Activated T-helper 1 cell treated with anti-CD3 and anti-CD28 coated beads, Interleukin-12 subunit alpha, Interleukin-12 subunit beta, Interleukin-2, Interleukin-4 antibody, amounts not matched to agents 30 ng/mL and 10 ng/mL and 1 ng/mL, durations not matched to agents 14 hours and 24 hours and 36 hours (primary cell): ENCODE measurements at regions of chr11 and their contacts with region 1.

Region 1: DNA sequence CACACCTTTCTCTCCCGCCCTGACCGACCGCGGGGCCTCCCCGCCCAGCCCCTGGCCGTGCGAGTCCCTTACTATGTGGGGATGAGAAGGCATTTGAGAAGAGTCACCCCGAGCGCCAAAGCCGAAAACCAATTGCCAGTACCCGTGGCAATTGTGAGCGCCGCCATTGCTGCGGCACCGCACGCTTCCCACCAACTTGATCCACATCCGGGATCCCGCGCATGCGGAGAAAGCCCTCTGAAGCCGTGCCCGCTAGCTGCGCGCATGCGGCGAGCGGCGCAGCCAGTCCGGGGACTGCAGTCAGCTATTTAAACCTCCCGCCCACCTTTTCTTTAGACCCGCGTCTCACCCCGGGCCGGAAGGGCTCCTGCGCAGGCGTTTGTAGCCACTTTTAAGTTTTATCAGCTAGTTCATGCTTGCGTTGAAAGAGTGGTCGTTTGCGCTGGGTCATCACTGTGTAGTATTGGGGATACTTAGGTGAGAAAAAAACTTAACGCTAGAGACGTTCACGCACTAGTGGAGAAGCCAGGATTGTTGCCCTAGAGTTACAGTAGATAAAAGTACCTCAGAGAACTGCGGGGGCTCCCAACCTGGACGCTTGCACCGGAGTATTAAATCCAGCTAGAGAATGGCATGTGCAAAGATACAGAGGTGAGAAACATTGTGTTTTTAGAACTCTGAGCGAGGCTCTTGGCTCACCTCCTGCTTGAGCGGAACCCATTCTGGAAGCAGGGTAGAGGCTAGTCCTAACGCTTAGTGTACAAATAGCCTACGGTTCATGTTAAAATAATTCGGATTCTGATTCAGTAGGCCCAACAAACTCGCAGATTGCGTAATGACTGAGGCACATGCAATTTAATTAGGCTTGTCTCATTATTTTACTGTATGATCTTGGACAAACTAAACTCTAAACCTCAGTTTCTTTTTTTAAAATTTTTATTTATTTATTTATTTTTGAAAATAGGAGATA is at the start of gene ALG8:
- DNase-seq: peak; percentile 96
- H3K4me3 Mint-ChIP-seq: peak within 1 kb of the TSS; percentile 95
- H3K27ac Mint-ChIP-seq: peak within 1 kb of the TSS; percentile 90
- H3K4me1 Mint-ChIP-seq: peaks cover 43% of the 10 kb centered on the region
- H3K27me3 Mint-ChIP-seq: no peaks in the 10 kb centered on the region
- total RNA-seq, gene ALG8: 57.9 and 74.2 TPM in 2 replicates

Region 2: GRCh38 chr11:77994412-77995362 is 145.0 kb before region 1 on chr11 and contains the start of gene INTS4:
- intact Hi-C with region 1: loop called (anchors 1 kb)
- DNase-seq: peak; percentile 98
- H3K4me3 Mint-ChIP-seq: peak within 1 kb of the TSS; percentile 92
- H3K27ac Mint-ChIP-seq: peak within 1 kb of the TSS; percentile 84
- H3K4me1 Mint-ChIP-seq: peaks cover 30% of the 10 kb centered on the region
- H3K27me3 Mint-ChIP-seq: no peaks in the 10 kb centered on the region
- total RNA-seq, gene INTS4: 58.2 and 63.6 TPM in 2 replicates

Region 3: DNA sequence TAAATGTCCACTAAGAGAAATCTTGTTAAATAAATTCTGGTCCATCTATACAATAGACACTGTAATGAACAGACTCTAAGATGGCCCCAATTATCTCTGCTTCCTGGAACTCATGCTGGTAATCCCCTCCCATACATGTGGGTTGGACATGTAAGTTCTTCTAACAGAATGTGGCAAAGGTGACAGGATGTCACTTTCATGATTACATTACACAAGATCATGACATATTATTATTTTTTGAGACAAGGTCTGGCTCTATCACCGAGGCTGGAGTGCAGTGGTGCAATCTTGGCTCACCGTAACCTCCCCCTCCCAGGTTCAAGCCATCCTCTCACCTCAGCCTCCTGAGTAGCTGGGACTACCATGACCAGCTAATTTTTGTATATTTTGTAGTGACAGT is 45.5 kb before region 1 on chr11:
- intact Hi-C with region 1: loop called (anchors 1 kb)
- DNase-seq: peak; percentile 20
- H3K4me3 Mint-ChIP-seq: peak overlapping the region; percentile 11
- H3K27ac Mint-ChIP-seq: peak overlapping the region; percentile 82
- H3K4me1 Mint-ChIP-seq: peaks cover 10% of the 10 kb centered on the region
- H3K27me3 Mint-ChIP-seq: no peaks in the 10 kb centered on the region

Region 4: GRCh38 chr11:78228467-78228866 is 88.8 kb after region 1 on chr11:
- intact Hi-C with region 1: loop called (anchors 2 kb)
- DNase-seq: peak; percentile 21
- H3K4me3 Mint-ChIP-seq: no peak overlapping the region
- H3K27ac Mint-ChIP-seq: no peak overlapping the region
- H3K4me1 Mint-ChIP-seq: peaks cover 75% of the 10 kb centered on the region
- H3K27me3 Mint-ChIP-seq: no peaks in the 10 kb centered on the region

Region 5: GRCh38 chr11:78325274-78325781 is 185.6 kb after region 1 on chr11:
- intact Hi-C with region 1: loop called (anchors 5 kb)
- DNase-seq: peak; percentile 28
- H3K4me3 Mint-ChIP-seq: peak overlapping the region; percentile 56
- H3K27ac Mint-ChIP-seq: peak overlapping the region; percentile 86
- H3K4me1 Mint-ChIP-seq: peaks cover 78% of the 10 kb centered on the region
- H3K27me3 Mint-ChIP-seq: no peaks in the 10 kb centered on the region

Region 6: GRCh38 chr11:78630561-78631303 is 491.0 kb after region 1 on chr11:
- intact Hi-C with region 1: no loop called
- DNase-seq: no peak
- H3K4me3 Mint-ChIP-seq: no peak overlapping the region
- H3K27ac Mint-ChIP-seq: no peak overlapping the region
- H3K4me1 Mint-ChIP-seq: peaks cover 15% of the 10 kb centered on the region
- H3K27me3 Mint-ChIP-seq: peaks cover 2% of the 10 kb centered on the region